AG04449 (cell line): ENCODE measurements at regions of chr2 and their contacts with region 1.

Region 1: GRCh38 chr2:152036611-152037469 is 62.0 kb downstream of the CACNB4 start:
- DNase-seq: peak; percentile 16
- H3K4me3 ChIP-seq: no peak overlapping the region
- CTCF ChIP-seq: peak; percentile 77

Region 2: GRCh38 chr2:152005607-152006006 is 31.2 kb before region 1 on chr2:
- CTCF ChIA-PET with region 1: no interaction called
- POLR2A ChIA-PET with region 1: no interaction called
- DNase-seq: no peak
- H3K4me3 ChIP-seq: no peak overlapping the region
- CTCF ChIP-seq: no peak

Region 3: DNA sequence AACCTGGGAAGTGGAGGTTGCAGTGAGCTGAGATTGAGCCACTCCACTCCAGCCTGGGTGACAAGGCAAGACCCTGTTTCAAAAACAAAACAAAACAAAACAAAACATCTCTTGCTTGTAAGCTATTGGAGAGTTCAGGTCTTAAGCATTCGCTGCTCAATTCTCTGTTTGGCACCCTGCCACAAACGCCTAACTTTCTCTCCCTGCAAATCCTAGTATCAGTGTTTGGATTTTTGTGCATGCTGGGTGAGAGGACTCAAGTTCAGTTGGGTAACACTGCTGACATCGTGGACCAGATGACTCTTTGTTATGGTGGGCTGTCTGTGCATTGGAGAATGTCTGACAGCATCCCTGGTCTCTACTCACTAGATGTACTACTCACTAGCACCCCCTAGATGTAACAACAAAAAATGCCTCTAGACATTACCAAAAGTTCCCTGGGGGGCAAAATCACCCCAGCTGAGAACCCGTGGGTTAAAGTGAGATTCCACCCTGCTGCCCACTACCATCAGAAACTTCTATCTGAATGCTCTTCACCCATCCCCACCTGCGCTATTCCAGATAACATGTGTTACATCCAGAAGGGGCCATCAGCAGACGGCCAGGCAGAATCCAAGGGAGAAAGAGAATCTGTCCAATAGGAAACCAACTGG is 11.1 kb after region 1 on chr2:
- CTCF ChIA-PET with region 1: interaction called, 31 read pairs
- POLR2A ChIA-PET with region 1: no interaction called
- DNase-seq: no peak
- H3K4me3 ChIP-seq: no peak overlapping the region
- CTCF ChIP-seq: no peak